ENCODE measurements at regions of chr3 and their contacts with region 1.

Region 1: GRCh38 chr3:57815036-57815435 is 58.9 kb downstream of the SLMAP start:
- DNase-seq: no peak
- ATAC-seq: no peak
- H3K4me3 ChIP-seq: no peak overlapping the region
- H3K27ac ChIP-seq: no peak overlapping the region
- H3K4me1 ChIP-seq: no peaks in the 10 kb centered on the region
- H3K27me3 ChIP-seq: no peaks in the 10 kb centered on the region
- CTCF ChIP-seq: no peak
- POLR2A ChIP-seq: no peak
- RAD21 ChIP-seq: no peak

Region 2: DNA sequence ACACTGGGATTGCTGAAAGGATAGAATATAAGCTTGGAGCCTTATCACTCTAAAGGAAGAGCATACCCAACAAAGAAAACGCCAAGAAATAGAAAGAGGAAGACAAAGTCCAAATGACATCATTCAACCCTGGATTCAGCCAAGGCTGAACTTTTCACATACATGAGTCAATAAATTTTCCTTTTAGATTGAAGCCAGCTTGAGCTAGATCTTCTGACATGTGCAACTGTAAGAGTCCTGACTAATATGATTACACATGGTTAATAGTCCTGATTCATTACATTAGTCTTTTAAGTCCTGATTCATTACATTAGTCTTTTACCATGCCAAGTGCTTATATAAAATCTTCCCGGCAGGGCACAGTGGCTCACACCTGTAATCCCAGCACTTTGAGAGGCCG is 108.6 kb before region 1 on chr3:
- CTCF ChIA-PET with region 1: no interaction called
- POLR2A ChIA-PET with region 1: no interaction called
- dilution Hi-C with region 1: no loop called
- in situ Hi-C with region 1: no loop called
- intact Hi-C with region 1: loop called (anchors 5 kb)
- DNase-seq: peak; percentile 93
- ATAC-seq: peak; percentile 49; the same call in 1 of the 2 replicates
- H3K4me3 ChIP-seq: no peak overlapping the region
- H3K27ac ChIP-seq: no peak overlapping the region
- H3K4me1 ChIP-seq: no peaks in the 10 kb centered on the region; the same call in 1 of the 2 replicates
- H3K27me3 ChIP-seq: no peaks in the 10 kb centered on the region
- CTCF ChIP-seq: no peak
- POLR2A ChIP-seq: no peak
- RAD21 ChIP-seq: no peak

Region 3: GRCh38 chr3:57896031-57896430 is 81.0 kb after region 1 on chr3:
- CTCF ChIA-PET with region 1: no interaction called
- POLR2A ChIA-PET with region 1: no interaction called
- dilution Hi-C with region 1: no loop called
- in situ Hi-C with region 1: no loop called
- intact Hi-C with region 1: no loop called
- DNase-seq: no peak
- ATAC-seq: no peak
- H3K4me3 ChIP-seq: no peak overlapping the region
- H3K27ac ChIP-seq: no peak overlapping the region
- H3K4me1 ChIP-seq: no peaks in the 10 kb centered on the region
- H3K27me3 ChIP-seq: no peaks in the 10 kb centered on the region
- CTCF ChIP-seq: no peak
- POLR2A ChIP-seq: no peak
- RAD21 ChIP-seq: no peak

Measured in IMR-90 (cell line).